Activated T-helper 2 cell treated with anti-CD3 and anti-CD28 coated beads, Interferon-gamma antibody, Interleukin-2, Interleukin-4, amounts not matched to agents 10 μg/mL and 5 μg/mL and 100 μg/mL, durations not matched to agents 14 hours and 24 hours and 36 hours (primary cell): ENCODE measurements at regions of chr12 and their contacts with region 1.

Region 1: GRCh38 chr12:82685790-82686167 is 927 bp upstream of the TMTC2 start:
- DNase-seq: peak; percentile 84
- H3K4me3 Mint-ChIP-seq: peak overlapping the region; percentile 98
- H3K27ac Mint-ChIP-seq: peak overlapping the region; percentile 69
- H3K4me1 Mint-ChIP-seq: peaks cover 18% of the 10 kb centered on the region
- H3K27me3 Mint-ChIP-seq: peaks cover 23% of the 10 kb centered on the region

Region 2: DNA sequence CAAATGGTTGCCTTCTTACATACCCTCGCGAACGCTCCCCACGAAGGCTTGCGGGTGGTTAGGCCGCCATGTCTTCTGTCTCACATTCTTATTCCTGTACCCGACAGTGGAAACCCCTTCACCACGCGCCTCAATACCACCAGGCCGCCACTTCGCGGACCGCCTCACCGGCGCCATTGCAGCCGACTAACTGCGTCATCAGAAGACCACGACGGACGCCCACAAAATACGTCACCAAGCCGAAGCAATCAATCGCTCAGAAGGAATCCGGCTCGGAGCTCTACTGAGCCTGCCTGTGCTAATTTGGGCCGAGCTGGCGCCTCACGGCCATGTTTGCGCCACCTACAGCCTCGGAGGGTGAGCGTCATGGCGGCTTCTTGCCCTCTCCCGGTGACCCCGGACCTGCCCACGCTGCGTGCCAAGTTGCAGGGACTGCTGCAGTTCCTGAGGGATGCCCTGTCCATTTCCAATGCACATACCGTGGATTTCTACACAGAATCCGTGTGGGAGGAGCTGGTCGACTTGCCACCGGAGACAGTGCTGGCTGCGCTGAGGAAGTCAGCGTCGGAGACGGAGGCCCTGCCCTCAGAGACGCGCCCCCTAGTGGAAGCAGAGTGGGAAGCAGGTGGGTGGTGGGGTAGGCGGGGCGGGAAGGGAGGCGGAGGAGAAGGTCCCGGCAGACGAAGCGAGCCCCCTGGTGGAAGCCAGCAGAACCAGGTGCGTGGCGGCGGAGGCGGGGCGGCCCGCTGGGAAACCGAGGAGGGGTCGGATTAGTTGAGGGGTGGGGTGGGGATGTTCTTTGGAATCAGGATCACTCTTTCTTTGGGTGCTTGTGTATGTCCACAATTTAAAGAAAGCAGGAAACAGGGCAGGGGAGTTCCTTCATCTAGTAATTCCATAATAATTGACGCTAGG is 327.3 kb before region 1 on chr12 and contains the starts of genes CCDC59 and METTL25:
- intact Hi-C with region 1: loop called (anchors 1 kb)
- DNase-seq: peak; percentile 94
- H3K4me3 Mint-ChIP-seq: peak within 1 kb of the TSS; percentile 99
- H3K27ac Mint-ChIP-seq: peak within 1 kb of the TSS; percentile 100
- H3K4me1 Mint-ChIP-seq: peaks cover 28% of the 10 kb centered on the region
- H3K27me3 Mint-ChIP-seq: no peaks in the 10 kb centered on the region
- total RNA-seq, gene CCDC59: 84.1 and 84.5 TPM in 2 replicates
- total RNA-seq, gene METTL25: 6.9 and 7.3 TPM in 2 replicates

Region 3: DNA sequence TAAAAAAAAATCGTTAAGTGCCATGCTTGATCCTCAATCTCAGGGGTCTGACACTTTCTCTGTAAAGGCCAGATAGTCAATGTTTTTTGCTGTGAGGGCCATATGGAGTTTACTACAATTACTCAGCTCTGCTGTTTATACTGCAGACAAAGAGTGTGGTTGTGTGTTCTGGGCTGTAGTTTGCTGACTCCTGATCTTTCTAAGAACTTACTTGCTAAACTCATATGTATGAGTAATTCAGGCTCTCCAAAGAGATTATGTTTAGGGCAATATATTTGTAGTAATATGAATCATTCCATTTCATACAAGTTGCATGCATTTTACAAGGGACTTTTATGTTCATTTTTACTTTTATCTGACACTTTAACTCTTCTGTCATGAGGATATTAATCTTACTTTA is 189.2 kb after region 1 on chr12:
- intact Hi-C with region 1: loop called (anchors 5 kb)
- DNase-seq: no peak
- H3K4me3 Mint-ChIP-seq: no peak overlapping the region
- H3K27ac Mint-ChIP-seq: no peak overlapping the region
- H3K4me1 Mint-ChIP-seq: peaks cover 4% of the 10 kb centered on the region
- H3K27me3 Mint-ChIP-seq: no peaks in the 10 kb centered on the region

Region 4: GRCh38 chr12:82996160-82996812 is 310.5 kb after region 1 on chr12:
- intact Hi-C with region 1: loop called (anchors 1 kb)
- DNase-seq: no peak
- H3K4me3 Mint-ChIP-seq: no peak overlapping the region
- H3K27ac Mint-ChIP-seq: no peak overlapping the region
- H3K4me1 Mint-ChIP-seq: no peaks in the 10 kb centered on the region
- H3K27me3 Mint-ChIP-seq: peaks cover 1% of the 10 kb centered on the region

Region 5: DNA sequence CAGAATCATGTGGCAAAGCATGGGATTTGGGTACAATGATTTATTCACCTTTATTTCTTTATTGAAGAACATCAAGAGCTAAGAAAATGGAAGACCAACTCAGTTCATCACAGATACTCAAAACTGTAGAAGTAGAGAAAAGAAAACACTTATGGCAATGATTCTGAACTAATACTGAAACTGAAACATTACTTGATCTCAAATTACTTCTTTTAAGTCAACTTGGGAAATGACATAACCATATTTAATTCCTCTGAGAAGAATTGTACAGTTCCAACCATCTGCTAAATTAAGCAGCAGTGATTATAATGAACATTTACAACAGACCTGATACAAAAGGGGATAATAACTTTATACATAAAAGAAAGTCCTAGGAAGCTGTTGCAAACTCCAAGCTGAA is 467.4 kb after region 1 on chr12:
- intact Hi-C with region 1: loop called (anchors 5 kb)
- DNase-seq: no peak
- H3K4me3 Mint-ChIP-seq: no peak overlapping the region
- H3K27ac Mint-ChIP-seq: no peak overlapping the region
- H3K4me1 Mint-ChIP-seq: peaks cover 6% of the 10 kb centered on the region
- H3K27me3 Mint-ChIP-seq: no peaks in the 10 kb centered on the region

Region 6: DNA sequence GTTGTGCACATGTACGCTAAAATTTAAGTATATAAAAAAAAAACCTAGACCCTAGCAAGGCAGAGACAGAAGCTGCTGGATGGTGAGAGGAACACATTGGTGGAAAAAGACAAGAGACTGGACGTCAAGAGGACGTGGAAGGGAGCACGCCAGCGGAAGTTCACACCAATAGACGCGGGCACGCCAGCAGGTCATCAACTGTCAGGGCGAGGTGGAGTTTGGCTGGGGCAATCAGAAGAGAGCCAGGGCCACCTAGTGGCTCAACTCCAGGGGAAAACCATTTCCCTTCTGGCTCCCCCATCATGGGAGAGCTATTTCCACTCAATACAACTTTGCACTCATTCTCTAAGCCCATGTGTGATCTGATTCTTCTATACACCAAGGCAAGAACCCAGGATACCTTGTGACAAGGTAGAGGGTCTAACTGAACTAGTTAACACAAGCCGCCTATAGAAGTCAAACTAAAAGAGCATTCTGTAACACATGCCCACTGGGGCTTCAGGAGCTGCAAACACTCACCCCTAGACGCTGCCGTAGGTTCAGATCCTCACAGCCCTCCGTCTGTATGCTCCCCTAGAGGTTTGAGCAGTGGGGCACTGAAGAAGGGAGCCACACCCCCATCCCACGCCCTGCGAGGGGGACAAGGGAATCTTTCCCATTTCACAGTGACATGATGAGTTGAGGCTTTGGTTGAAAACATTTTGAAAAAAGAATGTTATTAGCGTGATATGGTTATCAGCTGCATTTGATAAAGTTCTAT is 703.6 kb after region 1 on chr12:
- intact Hi-C with region 1: loop called (anchors 2 kb)
- DNase-seq: no peak
- H3K4me3 Mint-ChIP-seq: no peak overlapping the region
- H3K27ac Mint-ChIP-seq: no peak overlapping the region
- H3K4me1 Mint-ChIP-seq: peaks cover 3% of the 10 kb centered on the region
- H3K27me3 Mint-ChIP-seq: no peaks in the 10 kb centered on the region

Region 7: GRCh38 chr12:83823431-83823963 is 1137.7 kb after region 1 on chr12:
- intact Hi-C with region 1: loop called (anchors 5 kb)
- DNase-seq: peak; percentile 15
- H3K4me3 Mint-ChIP-seq: no peak overlapping the region
- H3K27ac Mint-ChIP-seq: no peak overlapping the region
- H3K4me1 Mint-ChIP-seq: no peaks in the 10 kb centered on the region
- H3K27me3 Mint-ChIP-seq: no peaks in the 10 kb centered on the region